ENCODE measurements at regions of chr4 and their contacts with region 1.

Region 1: DNA sequence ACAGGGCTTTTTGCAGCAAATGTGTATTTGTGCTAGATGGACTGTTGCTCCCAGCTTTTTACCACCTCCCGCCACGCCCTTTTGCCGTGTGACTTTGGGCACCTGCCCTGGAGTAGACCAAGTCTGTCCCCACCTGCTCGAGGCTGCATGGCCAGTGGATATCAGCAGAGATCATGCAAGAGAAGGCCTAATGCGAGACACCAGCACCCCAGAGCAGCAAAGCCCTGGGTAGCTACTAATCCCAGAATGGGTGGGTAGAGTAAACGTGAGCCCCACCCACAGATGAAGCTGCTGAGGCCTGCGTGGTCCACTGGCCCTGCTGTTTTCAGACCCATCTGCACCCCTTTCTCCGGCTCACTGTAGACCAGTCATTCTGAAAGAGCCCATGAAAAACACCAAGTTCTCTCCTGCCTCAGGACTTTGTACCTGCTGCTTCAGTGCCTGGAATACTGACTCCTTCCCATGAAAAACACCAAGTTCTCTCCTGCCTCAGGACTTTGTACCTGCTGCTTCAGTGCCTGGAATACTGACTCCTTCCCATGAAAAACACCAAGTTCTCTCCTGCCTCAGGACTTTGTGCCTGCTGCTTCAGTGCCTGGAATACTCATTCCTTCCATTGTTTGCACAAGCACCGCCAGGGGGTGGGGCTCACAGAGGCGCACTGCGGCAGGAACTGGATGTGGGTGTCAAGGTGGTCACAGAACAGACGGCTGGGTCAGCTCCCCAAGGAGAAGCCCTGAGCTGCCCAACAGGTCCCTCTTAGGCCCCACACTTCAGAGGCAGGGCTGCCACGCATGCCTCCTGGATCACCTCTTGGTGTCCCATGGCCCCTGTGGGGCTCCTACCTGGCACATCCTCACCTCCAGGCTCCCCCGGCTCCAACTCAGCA is 5.1 kb upstream of the TNIP2 start:
- DNase-seq: no peak
- H3K4me3 ChIP-seq: no peak overlapping the region
- CTCF ChIP-seq: no peak
- POLR2A ChIP-seq: no peak

Region 2: DNA sequence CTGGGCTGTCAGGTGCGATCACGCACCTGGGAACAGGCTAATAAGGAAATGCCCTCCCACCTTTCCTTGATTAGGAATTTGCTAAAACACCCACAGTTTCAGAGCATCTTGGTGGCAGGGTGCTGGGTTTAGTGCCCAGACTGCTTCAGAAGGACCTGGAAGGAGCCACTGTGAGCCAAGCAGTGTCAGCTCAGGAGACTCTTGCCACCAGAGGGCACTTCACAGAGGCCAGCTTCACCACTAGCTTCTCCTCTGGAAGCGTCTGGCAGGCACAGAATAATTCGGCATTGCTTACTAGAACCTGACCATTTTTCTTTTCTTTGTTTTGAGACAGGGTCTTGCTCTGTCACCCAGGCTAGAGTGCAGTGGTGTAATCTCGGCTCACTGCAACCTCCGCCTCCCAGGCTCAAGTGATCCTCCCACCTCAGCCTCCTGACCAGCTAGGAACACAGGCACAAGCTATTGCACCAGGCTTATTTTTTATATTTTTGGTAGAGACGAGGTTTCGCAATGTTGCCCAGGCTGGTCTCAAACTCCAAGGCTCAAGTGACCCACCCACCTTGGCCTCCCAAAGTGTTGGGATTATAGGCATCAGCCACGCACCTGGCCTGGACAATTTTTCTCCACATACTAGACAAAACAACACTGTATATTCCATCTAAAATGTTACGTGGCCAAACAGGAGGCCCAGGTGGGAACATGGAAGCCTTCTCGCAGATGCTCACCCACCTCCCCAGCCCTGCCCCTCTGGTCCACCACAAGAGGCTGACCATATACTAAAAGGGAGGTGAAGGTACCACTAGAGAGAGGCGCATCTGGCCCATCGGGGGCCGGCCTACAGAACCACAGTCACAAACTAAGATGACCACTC is 187.9 kb after region 1 on chr4:
- intact Hi-C with region 1: loop called (anchors 10 kb)
- DNase-seq: no peak
- H3K4me3 ChIP-seq: no peak overlapping the region
- CTCF ChIP-seq: no peak
- POLR2A ChIP-seq: no peak